Activated naive CD4-positive, alpha-beta T cell treated with anti-CD3 and anti-CD28 coated beads for 36 hours (primary cell): ENCODE measurements at regions of chr13 and their contacts with region 1.

Region 1: DNA sequence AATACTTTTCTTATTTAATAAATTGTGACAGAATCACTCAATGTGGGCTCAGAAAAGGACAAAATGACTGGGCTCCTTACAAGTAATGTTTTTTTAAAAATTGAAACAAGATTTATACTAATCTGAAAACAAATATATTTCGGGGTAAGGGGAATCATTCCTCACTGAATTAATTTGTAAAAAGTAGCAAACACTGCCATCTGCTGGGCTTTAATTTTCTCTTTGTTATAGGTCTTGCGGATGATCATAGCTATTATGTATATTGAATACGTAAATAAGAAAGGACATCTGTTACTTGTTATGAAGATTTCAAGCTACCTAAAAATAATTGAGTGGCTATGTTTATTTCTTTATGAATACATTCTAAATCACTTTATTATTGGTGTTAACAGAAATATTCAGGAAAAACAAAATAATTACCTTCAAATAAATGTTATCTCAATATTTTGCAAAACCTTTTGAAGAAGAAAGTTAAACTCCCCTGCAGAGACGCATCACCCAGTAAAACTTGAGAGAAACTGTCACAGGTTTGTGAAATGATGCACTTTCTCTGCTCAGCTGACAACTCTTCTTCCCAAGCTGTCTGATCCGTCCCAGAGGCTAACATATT is 17.8 kb upstream of the ENOX1 start:
- DNase-seq: peak; percentile 15
- H3K4me3 Mint-ChIP-seq: no peak overlapping the region
- H3K27ac Mint-ChIP-seq: no peak overlapping the region
- H3K4me1 Mint-ChIP-seq: peaks cover 8% of the 10 kb centered on the region
- H3K27me3 Mint-ChIP-seq: peaks cover 17% of the 10 kb centered on the region

Region 2: DNA sequence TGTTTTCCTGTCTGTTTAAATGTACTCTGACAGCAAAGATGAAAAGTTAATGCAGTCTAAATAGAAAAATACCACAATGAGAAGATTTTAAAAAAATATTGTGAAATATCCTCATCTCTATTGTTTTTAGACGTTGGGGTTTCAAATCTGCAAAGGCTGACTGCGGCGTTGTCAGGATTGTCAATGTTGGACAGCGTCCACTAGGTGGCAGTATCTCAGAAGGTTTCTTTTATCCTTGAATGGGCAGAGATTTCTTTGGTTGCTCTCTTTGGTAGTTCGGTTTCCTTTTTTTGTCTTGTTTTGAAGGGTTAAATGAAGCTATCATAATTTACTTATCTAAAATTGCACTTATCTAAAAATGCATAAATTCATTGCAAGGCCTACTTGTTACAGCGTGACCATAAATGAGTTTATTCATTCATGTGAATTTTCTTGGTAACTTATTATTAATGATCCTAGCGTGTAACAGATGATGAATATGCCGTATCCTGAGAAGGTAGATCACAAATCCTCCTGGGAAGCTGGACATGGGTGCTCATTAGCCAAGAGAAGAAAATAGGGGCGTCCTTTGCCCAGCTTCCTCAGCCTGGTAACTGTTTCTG is 1209.5 kb before region 1 on chr13:
- CTCF ChIA-PET with region 1: interaction called, 3 read pairs
- intact Hi-C with region 1: loop called (anchors 1 kb)
- DNase-seq: peak; percentile 73
- H3K4me3 Mint-ChIP-seq: no peak overlapping the region
- H3K27ac Mint-ChIP-seq: no peak overlapping the region
- H3K4me1 Mint-ChIP-seq: no peaks in the 10 kb centered on the region
- H3K27me3 Mint-ChIP-seq: no peaks in the 10 kb centered on the region

Region 3: DNA sequence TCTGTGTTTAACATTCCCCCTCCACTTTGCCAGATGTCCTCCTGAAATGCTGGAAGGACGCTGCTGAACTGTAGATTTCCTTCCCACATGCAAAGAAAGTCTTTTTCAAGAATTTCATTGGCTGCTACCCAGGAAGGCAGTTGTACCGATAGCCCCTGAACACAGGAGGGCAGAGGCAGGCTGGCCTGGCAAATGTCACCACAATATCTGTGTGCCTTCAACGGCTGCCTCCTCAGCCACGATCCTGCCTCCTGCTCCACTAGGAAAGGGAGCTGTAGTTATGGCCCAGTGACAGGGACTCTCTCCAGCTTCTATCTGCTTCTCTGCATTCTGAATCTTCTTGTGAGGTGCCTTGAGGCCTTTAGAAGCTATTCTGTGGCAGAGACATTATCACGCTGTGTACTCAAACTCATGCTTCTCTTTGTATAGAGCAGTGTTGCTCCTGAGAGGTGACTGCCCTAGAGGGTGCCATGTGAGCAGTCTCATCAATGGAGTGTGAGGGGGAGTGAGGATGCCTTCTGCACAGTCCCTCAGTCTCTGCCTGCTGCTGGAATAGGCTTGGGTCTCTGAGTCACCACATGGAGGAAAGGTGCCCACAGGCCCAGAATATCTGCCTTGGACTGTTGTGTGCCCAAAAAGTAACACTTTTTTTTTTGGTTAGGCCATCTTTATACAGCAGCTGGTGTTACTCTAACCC is 501.4 kb before region 1 on chr13:
- CTCF ChIA-PET with region 1: no interaction called
- intact Hi-C with region 1: loop called (anchors 2 kb)
- DNase-seq: peak; percentile 41
- H3K4me3 Mint-ChIP-seq: no peak overlapping the region
- H3K27ac Mint-ChIP-seq: no peak overlapping the region
- H3K4me1 Mint-ChIP-seq: no peaks in the 10 kb centered on the region
- H3K27me3 Mint-ChIP-seq: peaks cover 2% of the 10 kb centered on the region

Region 4: DNA sequence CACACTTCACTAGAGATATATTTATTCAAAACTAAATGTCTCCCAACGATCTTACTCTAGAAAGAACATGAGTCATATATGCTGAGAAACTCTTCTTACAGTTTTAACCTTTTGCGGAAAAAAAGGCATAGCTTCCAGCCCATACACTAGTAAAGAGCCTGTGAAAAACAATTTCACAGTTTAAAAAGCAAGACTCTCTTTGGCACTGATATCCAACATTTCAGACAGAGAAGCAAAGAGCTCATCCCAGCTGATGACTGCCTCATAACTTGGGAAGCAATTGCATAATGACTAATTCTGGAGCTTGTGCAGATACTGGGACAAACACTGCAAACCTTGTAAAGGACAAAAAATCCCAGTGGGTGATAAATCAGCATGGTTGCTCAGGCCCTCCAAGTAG is 105.8 kb before region 1 on chr13:
- CTCF ChIA-PET with region 1: interaction called, 4 read pairs
- intact Hi-C with region 1: loop called (anchors 10 kb)
- DNase-seq: no peak
- H3K4me3 Mint-ChIP-seq: no peak overlapping the region
- H3K27ac Mint-ChIP-seq: no peak overlapping the region
- H3K4me1 Mint-ChIP-seq: peaks cover 2% of the 10 kb centered on the region
- H3K27me3 Mint-ChIP-seq: peaks cover 18% of the 10 kb centered on the region

Region 5: DNA sequence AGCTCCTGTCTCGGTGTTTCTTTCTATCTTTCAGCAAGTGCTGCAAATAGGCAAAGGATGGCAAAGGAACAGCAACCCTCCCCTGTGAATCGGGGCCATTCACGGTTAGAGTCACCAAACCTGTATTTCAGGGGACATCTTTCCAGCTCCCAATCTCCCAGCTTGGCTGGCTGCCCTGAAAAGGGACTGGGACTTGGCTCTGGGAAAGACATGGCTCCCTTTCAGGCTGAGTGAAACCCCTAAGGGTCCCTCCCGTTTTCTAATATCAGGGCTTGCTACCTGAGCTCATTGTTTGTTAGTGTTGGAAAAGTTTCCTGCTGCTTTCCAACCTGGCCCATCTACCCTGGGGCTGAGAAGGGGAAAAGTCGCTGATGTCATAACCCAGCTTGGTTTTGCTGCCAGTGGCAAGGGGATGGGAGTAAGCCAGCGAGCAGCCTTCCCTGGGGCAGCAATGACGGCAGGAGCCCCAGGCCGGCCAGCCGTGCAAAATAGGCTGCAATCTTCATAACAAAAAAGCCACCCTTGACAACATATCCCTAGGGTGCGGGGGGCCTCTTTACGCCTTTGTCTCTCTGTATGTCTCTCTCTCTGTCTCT is 599.0 kb after region 1 on chr13:
- CTCF ChIA-PET with region 1: no interaction called
- intact Hi-C with region 1: no loop called
- DNase-seq: no peak
- H3K4me3 Mint-ChIP-seq: no peak overlapping the region
- H3K27ac Mint-ChIP-seq: no peak overlapping the region
- H3K4me1 Mint-ChIP-seq: no peaks in the 10 kb centered on the region
- H3K27me3 Mint-ChIP-seq: peaks cover 3% of the 10 kb centered on the region

Region 6: GRCh38 chr13:44435142-44435982 is 630.8 kb after region 1 on chr13:
- CTCF ChIA-PET with region 1: no interaction called
- intact Hi-C with region 1: loop called (anchors 10 kb)
- DNase-seq: peak; percentile 96
- H3K4me3 Mint-ChIP-seq: peak overlapping the region; percentile 76
- H3K27ac Mint-ChIP-seq: peak overlapping the region; percentile 24
- H3K4me1 Mint-ChIP-seq: peaks cover 15% of the 10 kb centered on the region
- H3K27me3 Mint-ChIP-seq: peaks cover 9% of the 10 kb centered on the region